ENCODE measurements at regions of chr2 and their contacts with region 1.

Region 1: GRCh38 chr2:3536682-3537632 is 17.6 kb upstream of the ADI1 start:
- DNase-seq: peak; percentile 84 to 87
- H3K4me3 ChIP-seq: peak overlapping the region; percentile 54
- H3K4me3 Mint-ChIP-seq: peak overlapping the region; percentile 95
- H3K27ac Mint-ChIP-seq: peak overlapping the region; percentile 99
- H3K4me1 ChIP-seq: peaks cover 7% of the 10 kb centered on the region; the same call in 1 of the 2 replicates
- H3K4me1 Mint-ChIP-seq: peaks cover 7% of the 10 kb centered on the region
- H3K27me3 ChIP-seq: no peaks in the 10 kb centered on the region
- H3K27me3 Mint-ChIP-seq: no peaks in the 10 kb centered on the region
- CTCF ChIP-seq: peak; percentile 46 to 81

Region 2: DNA sequence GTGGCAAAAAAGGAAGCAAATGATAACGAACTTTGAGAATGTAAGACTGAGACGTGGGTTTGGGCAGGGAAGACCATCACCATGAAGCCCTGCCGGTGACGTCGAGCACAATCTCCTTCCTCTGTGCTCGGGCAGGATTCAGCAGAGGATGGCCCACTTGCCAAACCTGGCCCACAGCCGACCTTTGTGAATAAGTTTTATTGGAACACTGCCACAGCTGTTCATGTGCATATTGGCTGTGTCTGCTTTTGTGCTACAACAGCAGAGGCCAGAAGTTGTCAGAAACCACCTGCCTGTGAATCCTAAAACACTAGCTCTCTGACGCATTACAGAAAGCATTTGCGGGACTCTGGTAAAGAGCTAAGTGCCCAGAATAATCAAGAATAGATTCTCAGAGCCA is 1429.8 kb before region 1 on chr2:
- CTCF ChIA-PET with region 1: no interaction called
- POLR2A ChIA-PET with region 1: no interaction called
- intact Hi-C with region 1: no loop called
- DNase-seq: no peak
- H3K4me3 ChIP-seq: no peak overlapping the region
- H3K4me3 Mint-ChIP-seq: no peak overlapping the region
- H3K27ac Mint-ChIP-seq: no peak overlapping the region
- H3K4me1 ChIP-seq: no peaks in the 10 kb centered on the region
- H3K4me1 Mint-ChIP-seq: no peaks in the 10 kb centered on the region
- H3K27me3 ChIP-seq: no peaks in the 10 kb centered on the region
- H3K27me3 Mint-ChIP-seq: peaks cover 11% of the 10 kb centered on the region
- CTCF ChIP-seq: no peak

Region 3: DNA sequence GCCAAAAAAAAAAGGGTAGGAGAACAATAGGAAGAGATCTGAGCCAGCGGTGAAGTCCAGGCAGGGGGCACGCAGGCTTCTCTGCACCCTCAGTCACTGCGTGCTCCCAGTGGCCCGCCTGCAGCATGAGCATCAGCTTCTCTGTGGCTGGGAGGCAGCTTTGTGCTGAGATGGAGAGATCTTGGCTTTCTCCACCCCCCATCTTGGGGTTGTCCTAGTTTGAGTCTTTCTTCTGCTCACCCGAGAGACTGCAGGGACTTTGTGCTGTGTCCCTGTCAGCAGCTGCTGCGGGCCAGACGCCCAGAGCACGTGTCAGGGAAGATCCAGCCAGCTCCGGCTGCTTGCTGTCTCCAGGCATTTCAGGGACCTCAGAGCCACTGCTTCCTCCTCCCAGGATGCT is 137.1 kb before region 1 on chr2:
- CTCF ChIA-PET with region 1: no interaction called
- POLR2A ChIA-PET with region 1: no interaction called
- intact Hi-C with region 1: no loop called
- DNase-seq: no peak
- H3K4me3 ChIP-seq: no peak overlapping the region
- H3K4me3 Mint-ChIP-seq: no peak overlapping the region
- H3K27ac Mint-ChIP-seq: no peak overlapping the region
- H3K4me1 ChIP-seq: no peaks in the 10 kb centered on the region
- H3K4me1 Mint-ChIP-seq: no peaks in the 10 kb centered on the region
- H3K27me3 ChIP-seq: no peaks in the 10 kb centered on the region
- H3K27me3 Mint-ChIP-seq: no peaks in the 10 kb centered on the region
- CTCF ChIP-seq: no peak

Region 4: DNA sequence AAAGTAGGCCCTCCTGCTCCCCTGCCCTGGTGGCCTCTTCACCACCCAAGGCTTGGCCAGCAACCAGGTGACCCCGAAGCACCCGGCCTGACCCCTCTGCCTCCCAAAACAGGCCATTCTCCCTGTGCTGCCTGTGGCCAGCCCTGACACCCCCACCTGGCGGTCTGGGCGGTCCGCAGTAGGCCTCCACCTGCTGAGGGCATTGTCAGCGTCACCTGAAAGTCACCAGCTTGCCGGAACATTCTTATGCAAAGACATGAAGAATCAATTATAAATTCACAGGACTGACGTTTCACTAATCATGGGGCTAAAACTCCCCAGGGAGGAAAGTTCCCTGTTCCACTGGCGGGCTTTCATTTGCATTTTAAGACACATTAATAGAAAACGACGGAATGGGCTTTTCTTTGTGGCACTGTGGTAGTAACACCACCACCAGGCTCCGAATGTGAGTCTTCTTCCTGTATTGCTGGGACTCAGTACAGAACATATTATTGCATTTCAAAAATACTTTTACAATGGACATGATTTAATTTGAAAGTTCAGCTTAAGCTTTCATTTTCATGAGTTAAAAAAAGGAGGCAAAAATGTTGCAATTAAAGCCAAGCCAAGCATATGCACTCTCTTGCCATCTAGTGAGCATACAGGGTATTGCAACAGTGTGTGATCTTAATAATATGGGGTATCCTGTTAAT is 75.0 kb before region 1 on chr2:
- CTCF ChIA-PET with region 1: interaction called, 3 read pairs
- POLR2A ChIA-PET with region 1: no interaction called
- intact Hi-C with region 1: loop called (anchors 5 kb)
- DNase-seq: peak in 1 of 2 experiments; percentile 57
- H3K4me3 ChIP-seq: no peak overlapping the region
- H3K4me3 Mint-ChIP-seq: no peak overlapping the region
- H3K27ac Mint-ChIP-seq: no peak overlapping the region
- H3K4me1 ChIP-seq: peaks cover 20% of the 10 kb centered on the region
- H3K4me1 Mint-ChIP-seq: no peaks in the 10 kb centered on the region
- H3K27me3 ChIP-seq: no peaks in the 10 kb centered on the region
- H3K27me3 Mint-ChIP-seq: no peaks in the 10 kb centered on the region
- CTCF ChIP-seq: peak; percentile 74 to 84

Region 5: DNA sequence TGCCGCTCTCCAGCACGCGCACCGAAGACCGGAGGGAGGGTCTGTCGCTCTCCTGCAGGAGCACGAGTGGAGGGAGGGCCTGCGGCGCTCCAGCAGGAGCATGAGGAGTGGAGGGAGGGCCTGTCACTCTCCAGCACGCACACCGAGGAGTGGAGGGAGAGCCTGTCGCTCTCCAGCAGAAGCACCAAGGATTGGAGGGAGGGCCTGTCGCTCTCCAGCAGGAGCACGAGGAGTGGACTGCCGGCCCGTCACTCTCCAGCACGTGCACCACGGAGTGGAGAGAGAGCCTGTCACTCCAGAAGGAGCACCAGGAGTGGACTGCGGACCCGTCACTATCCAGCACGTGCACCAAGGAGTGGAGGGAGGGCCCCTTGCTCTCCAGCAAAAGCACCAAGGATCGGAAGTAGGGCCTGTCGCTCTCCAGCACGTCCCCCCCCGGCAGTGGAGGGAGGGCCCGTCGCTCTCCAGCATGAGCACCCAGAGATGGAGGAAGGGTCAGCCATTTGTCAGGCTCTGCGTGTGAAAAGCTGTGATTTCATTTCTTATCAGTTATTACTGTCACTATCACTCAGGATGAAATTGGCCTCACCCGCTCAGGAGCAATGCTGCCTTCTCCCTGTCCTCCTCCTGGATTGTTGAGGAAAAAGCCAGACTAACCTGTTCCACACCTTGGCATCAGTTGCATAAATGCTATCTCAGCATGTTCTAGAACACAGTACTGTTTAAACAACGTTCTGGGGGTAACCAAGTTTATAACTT is 53.6 kb before region 1 on chr2:
- CTCF ChIA-PET with region 1: no interaction called
- POLR2A ChIA-PET with region 1: no interaction called
- intact Hi-C with region 1: loop called (anchors 1 kb)
- DNase-seq: peak; percentile 98 to 99
- H3K4me3 ChIP-seq: peak overlapping the region; percentile 42
- H3K4me3 Mint-ChIP-seq: peak overlapping the region; percentile 77
- H3K27ac Mint-ChIP-seq: peak overlapping the region; percentile 93
- H3K4me1 ChIP-seq: peaks cover 12% of the 10 kb centered on the region
- H3K4me1 Mint-ChIP-seq: peaks cover 10% of the 10 kb centered on the region
- H3K27me3 ChIP-seq: no peaks in the 10 kb centered on the region
- H3K27me3 Mint-ChIP-seq: no peaks in the 10 kb centered on the region
- CTCF ChIP-seq: no peak

Region 6: GRCh38 chr2:3644891-3645605 is 108.1 kb after region 1 on chr2:
- CTCF ChIA-PET with region 1: no interaction called
- POLR2A ChIA-PET with region 1: no interaction called
- intact Hi-C with region 1: loop called (anchors 1 kb)
- DNase-seq: no peak
- H3K4me3 ChIP-seq: no peak overlapping the region
- H3K4me3 Mint-ChIP-seq: no peak overlapping the region
- H3K27ac Mint-ChIP-seq: peak overlapping the region; percentile 62
- H3K4me1 ChIP-seq: peaks cover 18% of the 10 kb centered on the region
- H3K4me1 Mint-ChIP-seq: peaks cover 21% of the 10 kb centered on the region
- H3K27me3 ChIP-seq: no peaks in the 10 kb centered on the region
- H3K27me3 Mint-ChIP-seq: no peaks in the 10 kb centered on the region
- CTCF ChIP-seq: no peak

Measured in Caco-2 (cell line).